Posterior vena cava (tissue), 2 donors: ENCODE measurements at regions of chr3 and their contacts with region 1.

Region 1: DNA sequence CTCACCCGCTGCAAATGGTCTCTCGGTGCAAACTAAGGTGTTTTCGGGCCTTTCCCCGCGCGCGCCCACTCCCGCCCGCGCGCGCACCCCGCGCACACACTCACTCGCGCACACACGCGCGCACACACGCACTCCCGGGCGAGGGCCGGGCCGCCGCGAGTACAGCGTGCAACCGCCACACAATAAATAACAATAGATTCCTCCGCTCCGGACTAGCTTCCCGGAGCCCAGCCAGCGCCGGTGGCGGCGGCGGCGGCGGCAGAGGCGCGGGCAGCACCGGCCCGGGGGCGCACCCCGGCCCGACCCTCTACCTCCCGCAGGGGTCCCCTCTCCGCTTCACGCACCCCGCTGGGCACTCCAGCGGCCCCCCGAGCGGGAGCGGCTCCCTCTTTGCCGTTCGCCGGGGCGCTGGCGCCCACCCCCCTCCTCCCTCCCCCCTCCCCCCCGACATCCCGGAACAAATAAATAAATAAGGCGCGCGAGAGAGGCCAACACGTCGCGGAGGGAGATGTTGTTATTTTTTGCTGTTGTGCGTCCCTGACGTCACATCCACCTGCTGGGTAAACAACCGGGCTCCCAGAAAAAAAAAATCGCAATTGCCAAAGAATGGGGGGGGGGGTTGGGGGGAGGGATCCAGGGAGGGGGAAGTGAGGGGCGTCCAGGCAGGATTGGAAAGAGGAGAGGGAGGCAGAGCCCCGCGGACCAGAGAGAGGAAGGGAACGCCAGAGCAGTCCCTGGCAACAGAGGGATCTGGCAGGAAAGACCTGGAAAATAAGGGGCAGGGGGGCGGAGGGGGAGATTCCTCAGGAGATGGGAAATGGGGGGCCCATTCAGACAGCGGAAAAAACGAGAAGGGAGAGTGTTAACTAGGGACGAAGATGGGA is at the start of gene FOXP1:
- DNase-seq: peak; percentile 91
- total RNA-seq, gene FOXP1: 109 to 112 TPM

Region 2: DNA sequence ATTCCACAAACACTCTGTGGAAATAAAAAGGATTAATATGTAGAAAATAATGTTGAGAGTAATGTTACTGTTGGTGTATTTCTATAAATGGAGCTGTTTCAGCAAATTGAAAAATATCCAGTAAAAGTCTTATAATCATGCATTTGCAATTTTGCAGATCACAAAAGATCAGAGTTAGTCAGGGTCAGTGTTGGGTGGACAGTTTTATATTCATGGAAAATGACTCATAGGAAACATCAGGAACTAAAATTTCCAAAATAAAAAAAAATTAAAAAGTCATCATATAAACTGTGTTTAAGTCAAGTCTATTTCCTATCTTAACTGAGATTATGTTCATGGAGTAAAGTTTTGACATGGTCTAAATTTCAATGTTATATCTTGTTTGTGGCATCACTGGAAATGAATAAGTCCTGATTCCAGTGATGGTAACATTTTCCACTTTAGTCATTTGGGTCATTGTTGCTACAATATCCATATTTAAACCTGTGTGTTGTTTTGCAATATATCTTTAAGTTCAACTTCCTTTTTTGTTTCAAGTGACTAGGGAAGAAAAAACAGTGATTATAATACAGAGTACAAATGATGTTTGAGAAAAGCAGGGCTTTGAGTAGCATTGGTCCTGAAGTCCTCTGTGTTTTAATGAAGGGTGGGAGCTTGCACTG is 1806.8 kb before region 1 on chr3:
- intact Hi-C with region 1: loop called in 1 of 2 experiments (anchors 5 kb)
- DNase-seq: no peak

Region 3: GRCh38 chr3:70716832-70717231 is 867.0 kb before region 1 on chr3:
- intact Hi-C with region 1: loop called in 1 of 2 experiments (anchors 10 kb)
- DNase-seq: peak; percentile 69

Region 4: GRCh38 chr3:71247221-71247976 is 336.4 kb before region 1 on chr3:
- intact Hi-C with region 1: loop called in 1 of 2 experiments (anchors 5 kb)
- DNase-seq: no peak